Activated T-helper 2 cell treated with anti-CD3 and anti-CD28 coated beads, Interferon-gamma antibody, Interleukin-2, Interleukin-4, amounts not matched to agents 10 μg/mL and 5 μg/mL and 100 μg/mL, durations not matched to agents 14 hours and 24 hours and 36 hours (primary cell): ENCODE measurements at regions of chr20 and their contacts with region 1.

Region 1: DNA sequence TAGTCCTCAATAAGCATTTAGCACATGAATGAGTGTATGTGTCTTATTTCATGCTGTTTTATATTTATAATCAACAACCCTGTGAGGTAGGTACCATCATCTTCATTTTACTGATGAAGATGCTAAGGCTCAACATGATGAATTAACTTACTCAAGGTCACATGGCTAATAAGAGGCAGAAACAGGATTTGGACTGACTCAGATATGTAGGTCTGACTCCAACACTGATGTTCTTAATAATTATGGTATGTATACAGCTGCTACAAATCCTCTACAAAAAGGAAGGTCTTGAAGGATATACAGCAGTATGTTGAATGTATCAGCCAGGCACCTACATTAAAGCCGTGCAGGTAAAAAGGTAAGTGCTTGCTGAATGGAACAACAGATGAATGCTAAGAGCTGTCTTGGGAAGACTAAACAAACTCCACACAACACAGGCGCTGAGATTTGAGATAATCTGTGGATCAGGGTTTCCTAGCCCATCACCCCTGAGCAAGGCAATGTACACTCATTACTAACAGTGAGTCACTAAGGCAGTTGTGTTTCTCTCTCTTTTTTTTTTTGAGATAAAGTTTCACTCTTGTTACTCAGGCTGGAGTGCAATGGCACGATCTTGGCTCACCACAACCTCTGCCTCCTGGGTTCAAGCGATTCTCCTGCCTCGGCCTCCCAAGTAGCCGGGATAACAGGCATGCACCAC is 31.9 kb downstream of the TTI1 start:
- DNase-seq: no peak
- H3K4me3 Mint-ChIP-seq: no peak overlapping the region
- H3K27ac Mint-ChIP-seq: no peak overlapping the region
- H3K4me1 Mint-ChIP-seq: peaks cover 27% of the 10 kb centered on the region
- H3K27me3 Mint-ChIP-seq: no peaks in the 10 kb centered on the region

Region 2: DNA sequence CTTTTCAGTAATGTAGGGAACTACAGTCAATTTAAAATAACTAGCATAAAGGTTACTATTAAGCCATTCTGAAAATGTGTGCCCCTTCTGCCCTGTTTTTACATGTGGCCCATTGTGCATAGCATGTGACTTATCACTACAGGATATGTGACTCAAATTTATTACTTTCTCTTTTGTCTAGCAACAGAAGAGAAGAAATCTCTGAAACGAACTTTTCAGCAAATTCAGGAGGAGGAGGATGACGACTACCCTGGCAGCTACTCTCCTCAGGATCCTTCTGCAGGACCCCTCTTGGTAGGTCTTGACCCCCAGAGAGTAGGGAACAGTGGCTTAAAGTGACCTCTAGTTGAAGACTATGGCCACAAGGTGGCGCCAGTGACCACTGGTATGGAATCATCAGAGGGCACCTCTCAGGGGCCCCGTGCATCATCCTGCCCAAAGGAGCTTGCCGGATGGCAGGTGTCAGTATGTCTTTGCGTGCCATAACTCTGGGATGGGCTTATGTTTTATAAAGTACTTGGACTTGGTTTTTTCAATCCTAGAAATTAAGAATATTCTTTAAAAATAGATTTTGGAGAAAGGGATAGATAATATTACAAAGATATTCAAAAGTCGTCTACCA is 56.1 kb after region 1 on chr20:
- intact Hi-C with region 1: loop called (anchors 10 kb)
- DNase-seq: peak; percentile 50
- H3K4me3 Mint-ChIP-seq: no peak overlapping the region
- H3K27ac Mint-ChIP-seq: peak overlapping the region; percentile 79
- H3K4me1 Mint-ChIP-seq: peaks cover 35% of the 10 kb centered on the region
- H3K27me3 Mint-ChIP-seq: no peaks in the 10 kb centered on the region